Activated T-helper 2 cell treated with anti-CD3 and anti-CD28 coated beads, Interferon-gamma antibody, Interleukin-2, Interleukin-4, amounts not matched to agents 10 μg/mL and 5 μg/mL and 100 μg/mL, durations not matched to agents 14 hours and 24 hours and 36 hours (primary cell): ENCODE measurements at regions of chr17 and their contacts with region 1.

Region 1: DNA sequence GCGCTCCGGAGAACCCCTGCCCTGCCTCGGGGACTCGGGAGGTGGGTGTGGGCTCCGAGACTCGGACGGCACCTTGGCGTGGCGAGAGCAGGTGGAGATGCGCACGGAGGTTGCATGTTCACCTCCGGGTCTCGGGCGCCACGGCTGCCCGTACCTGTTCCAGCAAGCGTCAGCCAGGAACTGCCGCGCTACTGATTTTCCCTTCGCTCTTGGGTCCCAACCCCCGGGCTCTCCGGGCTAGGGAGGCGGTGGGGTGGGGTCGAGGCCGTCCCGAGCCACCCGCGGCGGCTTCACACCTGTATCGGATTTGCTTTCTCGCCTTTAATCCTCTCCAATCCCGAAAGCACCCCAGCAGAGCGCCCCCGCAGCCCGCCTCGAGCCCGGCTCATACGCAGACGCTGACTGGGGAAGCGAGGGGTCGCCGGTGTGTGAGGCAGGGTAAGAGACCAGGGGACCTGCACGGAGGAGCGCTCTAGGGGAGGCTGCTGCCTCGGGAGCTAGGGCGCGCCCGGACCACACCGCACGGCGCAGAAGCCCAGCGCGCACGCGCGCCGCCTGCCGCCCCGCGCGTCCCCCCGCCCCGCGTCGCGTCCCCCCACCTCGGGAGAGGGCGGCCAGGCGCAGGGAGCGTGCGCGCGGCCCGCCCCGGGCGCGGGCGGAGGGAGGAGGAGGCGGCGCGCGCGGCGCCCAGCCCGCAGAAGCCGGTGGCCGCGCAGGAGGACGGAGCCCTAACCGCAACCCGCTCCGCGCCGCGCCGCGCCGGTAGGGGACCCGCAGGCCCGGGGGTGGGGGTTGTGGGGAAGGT is at the start of gene DUSP14:
- DNase-seq: peak; percentile 77
- H3K4me3 Mint-ChIP-seq: peak within 1 kb of the TSS; percentile 92
- H3K27ac Mint-ChIP-seq: peak within 1 kb of the TSS; percentile 94
- H3K4me1 Mint-ChIP-seq: peaks cover 40% of the 10 kb centered on the region
- H3K27me3 Mint-ChIP-seq: no peaks in the 10 kb centered on the region
- total RNA-seq, gene DUSP14: 19.5 and 21.0 TPM in 2 replicates

Region 2: DNA sequence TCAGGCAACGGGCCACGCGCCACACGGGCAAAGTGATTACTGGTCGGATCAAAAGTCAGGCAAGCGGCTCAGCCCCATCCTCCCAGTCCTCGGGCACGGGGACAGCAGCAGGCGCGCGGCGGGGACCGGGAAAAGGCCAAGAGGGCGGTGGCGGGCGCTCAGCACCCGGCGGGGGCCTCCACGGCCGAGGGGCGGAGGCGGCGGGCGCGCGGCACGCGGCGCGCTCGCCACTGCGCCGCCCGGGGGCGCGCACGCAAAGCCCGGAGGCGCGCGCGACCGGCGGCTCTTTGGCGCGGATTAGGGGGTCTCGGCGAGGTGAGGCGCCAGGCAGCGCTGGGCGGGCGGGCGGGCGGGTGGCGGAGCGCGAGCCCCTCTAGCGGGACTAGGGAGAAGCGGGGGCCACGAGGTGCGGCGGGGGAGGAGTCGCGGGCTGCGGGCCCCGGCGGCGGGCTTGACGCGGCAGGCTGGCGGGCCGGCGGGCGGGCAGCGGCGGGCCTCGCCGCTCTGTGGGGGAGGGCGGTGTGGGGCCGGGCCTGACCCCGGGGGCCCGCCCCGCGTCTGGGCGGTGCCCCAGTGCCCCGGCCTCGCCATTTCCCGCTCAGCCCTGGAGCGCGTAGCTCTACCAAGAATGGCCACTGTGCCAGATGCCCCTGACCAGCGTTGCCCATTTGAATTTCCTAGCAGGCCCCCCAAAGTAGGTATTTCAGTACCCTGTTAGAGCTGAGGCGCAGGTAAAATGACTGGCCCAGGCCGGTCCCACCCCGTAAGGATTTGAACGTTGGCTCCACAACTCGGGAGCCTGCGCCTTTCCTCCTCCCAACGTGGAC is 82.6 kb before region 1 on chr17 and contains the starts of genes ACACA and TADA2A:
- intact Hi-C with region 1: loop called (anchors 2 kb)
- DNase-seq: peak; percentile 74
- H3K4me3 Mint-ChIP-seq: peak within 1 kb of the TSS; percentile 97
- H3K27ac Mint-ChIP-seq: peak within 1 kb of the TSS; percentile 94
- H3K4me1 Mint-ChIP-seq: peaks cover 42% of the 10 kb centered on the region
- H3K27me3 Mint-ChIP-seq: no peaks in the 10 kb centered on the region
- total RNA-seq, gene ACACA: 109 and 110 TPM in 2 replicates
- total RNA-seq, gene TADA2A: 34.3 and 34.6 TPM in 2 replicates

Region 3: DNA sequence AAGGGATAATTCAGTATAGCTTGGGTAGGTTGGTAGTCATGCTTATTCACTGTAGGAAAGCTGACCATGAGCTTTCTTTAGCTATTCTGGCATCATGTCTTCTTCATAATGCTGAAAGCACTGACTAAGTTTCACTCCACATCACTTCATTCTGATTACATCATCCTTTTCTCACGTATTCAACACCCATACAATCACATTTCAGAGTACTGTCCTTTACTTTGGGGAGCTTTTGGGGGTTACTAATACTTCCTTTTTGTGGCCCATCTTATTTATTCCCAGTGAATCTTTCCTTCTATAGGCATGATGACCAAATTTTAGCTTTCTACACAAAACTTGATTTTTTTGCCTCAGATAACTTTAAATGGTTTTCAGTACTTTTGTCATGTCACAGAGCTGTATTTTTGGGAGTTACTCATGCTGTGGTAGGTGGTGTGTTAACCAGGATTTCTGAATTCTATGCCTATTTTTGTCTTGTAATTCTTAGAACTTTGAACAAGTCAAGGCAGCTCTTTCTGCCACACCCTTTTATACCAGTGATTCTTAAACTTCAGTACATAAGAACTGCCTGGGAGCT is 59.3 kb before region 1 on chr17:
- intact Hi-C with region 1: loop called (anchors 2 kb)
- DNase-seq: no peak
- H3K4me3 Mint-ChIP-seq: peak overlapping the region; percentile 51
- H3K27ac Mint-ChIP-seq: peak overlapping the region; percentile 92
- H3K4me1 Mint-ChIP-seq: peaks cover 24% of the 10 kb centered on the region
- H3K27me3 Mint-ChIP-seq: no peaks in the 10 kb centered on the region